ENCODE measurements at regions of chr14 and their contacts with region 1.

Region 1: GRCh38 chr14:54566410-54567223 is at the start of gene SAMD4A:
- DNase-seq: peak; percentile 95
- H3K4me3 ChIP-seq: peak within 1 kb of the TSS; percentile 73 to 90 (median 82)
- H3K27ac ChIP-seq: peak within 1 kb of the TSS; percentile 98 to 100 (median 99)
- H3K4me1 ChIP-seq: peaks cover 37 to 48% (median 42%) of the 10 kb centered on the region in 4 donors
- H3K27me3 ChIP-seq: peaks cover 0 to 5% (median 0%) of the 10 kb centered on the region in 4 donors
- CTCF ChIP-seq: peak in 2 of 3 experiments; percentile 43 to 50
- EP300 ChIP-seq: no peak
- POLR2A ChIP-seq: peak; percentile 32
- total RNA-seq, gene SAMD4A: 76.8 to 123 (median 97.0) TPM

Region 2: DNA sequence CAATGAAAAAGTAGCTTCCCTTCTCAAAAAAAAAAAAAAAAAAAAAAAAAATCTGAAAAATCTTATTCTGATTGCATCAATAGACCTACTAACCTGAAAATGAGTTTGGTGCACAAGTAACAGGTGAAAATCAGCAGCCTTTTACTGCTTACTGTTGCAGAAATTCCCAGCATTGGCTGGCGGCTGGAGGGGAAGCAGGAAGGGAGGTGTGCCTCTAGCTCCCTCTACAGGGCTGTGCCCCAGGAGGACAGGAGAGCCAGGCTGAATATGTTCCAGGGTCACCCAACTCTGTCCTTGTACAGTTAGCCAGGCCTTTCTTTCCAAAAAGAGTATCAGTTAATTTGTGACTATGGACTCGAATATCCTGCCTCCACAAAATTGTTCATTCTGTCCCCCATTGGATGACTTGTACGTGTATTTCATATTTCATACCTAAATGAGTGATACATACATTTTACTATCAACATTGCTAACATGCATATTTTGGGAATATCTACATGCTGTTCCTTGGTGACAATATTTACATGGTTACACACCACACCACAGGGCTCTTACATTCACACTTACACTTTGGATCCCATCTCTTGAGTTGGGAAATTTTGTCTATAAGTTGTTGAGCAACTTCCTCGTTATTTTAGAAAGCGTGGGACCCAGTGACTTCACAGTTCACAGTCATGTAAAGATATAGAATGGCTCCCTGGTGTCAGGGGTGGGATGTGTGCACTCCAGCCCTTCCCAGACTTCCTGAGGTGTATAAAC is 125.1 kb after region 1 on chr14:
- intact Hi-C with region 1: loop called (anchors 1 kb)
- DNase-seq: no peak
- H3K4me3 ChIP-seq: no peak overlapping the region
- H3K27ac ChIP-seq: peak overlapping the region; percentile 5 to 48 (median 18)
- H3K4me1 ChIP-seq: peaks cover 39 to 56% (median 51%) of the 10 kb centered on the region in 4 donors
- H3K27me3 ChIP-seq: no peaks in the 10 kb centered on the region
- CTCF ChIP-seq: peak; percentile 83 to 86 (median 84)
- EP300 ChIP-seq: no peak
- POLR2A ChIP-seq: no peak

Region 3: GRCh38 chr14:54773171-54773975 is 206.8 kb after region 1 on chr14:
- intact Hi-C with region 1: loop called (anchors 1 kb)
- DNase-seq: peak; percentile 96
- H3K4me3 ChIP-seq: peak overlapping the region in 2 of 4 donors; percentile 9 to 20
- H3K27ac ChIP-seq: peak overlapping the region; percentile 86 to 92 (median 90)
- H3K4me1 ChIP-seq: peaks cover 46 to 71% (median 66%) of the 10 kb centered on the region in 4 donors
- H3K27me3 ChIP-seq: no peaks in the 10 kb centered on the region
- CTCF ChIP-seq: peak; percentile 68 to 78 (median 72)
- EP300 ChIP-seq: peak; percentile 83
- POLR2A ChIP-seq: no peak

Region 4: DNA sequence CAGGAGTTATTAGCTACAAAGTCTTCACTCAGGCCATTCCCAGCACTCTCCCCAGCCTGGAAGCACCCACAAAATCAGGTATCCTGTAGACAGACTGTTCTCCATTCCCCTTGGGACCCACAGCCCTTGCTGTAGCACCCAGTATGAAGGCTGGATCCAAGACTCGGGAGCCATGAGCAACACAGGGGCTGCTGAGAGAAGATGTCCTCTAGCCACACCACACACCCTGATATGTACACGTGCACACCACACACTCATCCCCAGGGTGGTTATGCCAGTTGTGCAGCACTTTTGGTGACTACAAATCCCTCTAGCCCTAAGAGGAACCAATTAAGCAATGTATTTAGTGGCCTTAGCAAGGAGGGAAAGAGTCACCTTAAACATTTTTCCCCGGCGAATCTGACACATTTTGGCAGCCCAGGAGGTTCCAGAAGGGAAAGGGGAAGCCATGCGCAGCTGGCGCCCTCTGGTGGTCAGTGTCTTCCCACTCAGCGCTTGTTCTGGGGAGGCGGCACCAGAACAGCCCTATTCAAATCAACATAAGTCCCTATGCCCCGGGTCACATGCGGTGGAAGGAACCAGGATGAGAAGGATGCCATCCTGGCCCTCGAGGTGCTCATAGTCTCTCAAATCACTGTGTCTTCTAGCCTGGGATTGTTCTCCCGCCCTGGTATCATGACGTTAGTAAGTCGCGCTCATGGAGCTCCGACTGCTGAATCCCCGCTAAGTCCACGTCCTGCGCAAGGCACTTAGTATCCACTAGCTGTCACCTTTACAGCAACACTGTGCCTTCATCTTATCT is 239.1 kb after region 1 on chr14:
- intact Hi-C with region 1: loop called (anchors 10 kb)
- DNase-seq: peak; percentile 96
- H3K4me3 ChIP-seq: peak overlapping the region in 3 of 4 donors; percentile 8 to 21 (median 9)
- H3K27ac ChIP-seq: no peak overlapping the region
- H3K4me1 ChIP-seq: peaks cover 0 to 13% (median 10%) of the 10 kb centered on the region in 4 donors
- H3K27me3 ChIP-seq: no peaks in the 10 kb centered on the region
- CTCF ChIP-seq: peak; percentile 85 to 96 (median 93)
- EP300 ChIP-seq: no peak
- POLR2A ChIP-seq: no peak

Measured in esophagus muscularis mucosa (tissue), 4 donors.